ENCODE measurements at regions of chr17 and their contacts with region 1.

Region 1: GRCh38 chr17:50865984-50866774 is at the start of gene TOB1:
- DNase-seq: peak; percentile 97
- ATAC-seq: peak; percentile 76
- H3K4me3 Mint-ChIP-seq: peak within 1 kb of the TSS; percentile 99
- H3K27ac Mint-ChIP-seq: peak within 1 kb of the TSS; percentile 100
- H3K4me1 Mint-ChIP-seq: peaks cover 44% of the 10 kb centered on the region
- H3K27me3 Mint-ChIP-seq: no peaks in the 10 kb centered on the region
- CTCF ChIP-seq: no peak
- total RNA-seq, gene TOB1: 18.8 and 20.4 TPM in 2 replicates

Region 2: DNA sequence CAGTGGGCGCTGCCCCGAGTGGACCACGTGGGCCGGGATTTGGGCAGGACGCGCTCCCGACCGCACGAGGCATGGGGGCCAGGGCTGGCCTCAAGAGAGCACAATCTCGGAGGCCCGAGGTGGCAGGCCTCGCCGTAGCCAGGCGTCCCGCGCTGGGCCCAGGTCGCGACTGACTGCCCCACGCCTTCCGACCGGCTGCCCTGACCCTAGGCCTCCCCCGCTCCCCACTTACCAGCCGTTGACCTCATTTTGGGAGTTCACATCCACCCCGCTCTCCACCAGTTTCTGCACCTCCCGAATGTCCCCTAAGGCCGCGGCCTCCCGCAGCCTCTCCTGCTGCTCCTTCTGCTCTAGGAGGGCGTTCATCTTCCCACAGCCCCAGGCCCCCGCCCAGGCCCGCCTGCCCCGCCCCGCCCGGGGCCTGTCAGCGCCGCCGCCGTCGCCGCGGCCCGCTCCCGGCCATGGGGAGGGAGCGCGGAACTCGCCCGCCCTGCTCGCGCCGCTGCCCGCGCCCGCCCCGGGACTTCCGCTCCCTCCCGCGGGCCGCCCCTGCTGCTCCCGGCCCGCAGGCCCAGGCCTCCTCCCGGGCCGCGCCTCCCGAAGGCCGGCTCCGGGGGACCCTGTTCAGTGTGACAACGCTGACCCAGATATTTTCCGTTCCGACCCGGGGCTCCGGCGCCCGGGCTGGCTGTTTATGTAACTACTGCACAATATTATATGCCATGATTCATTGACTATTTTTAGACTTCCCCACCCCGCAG is 158.7 kb before region 1 on chr17 and contains the start of gene ANKRD40:
- CTCF ChIA-PET with region 1: no interaction called
- POLR2A ChIA-PET with region 1: interaction called, 4 read pairs
- intact Hi-C with region 1: loop called (anchors 2 kb)
- DNase-seq: peak; percentile 91
- ATAC-seq: peak; percentile 82
- H3K4me3 Mint-ChIP-seq: peak within 1 kb of the TSS; percentile 95
- H3K27ac Mint-ChIP-seq: peak within 1 kb of the TSS; percentile 96
- H3K4me1 Mint-ChIP-seq: peaks cover 38% of the 10 kb centered on the region
- H3K27me3 Mint-ChIP-seq: no peaks in the 10 kb centered on the region
- CTCF ChIP-seq: no peak
- total RNA-seq, gene ANKRD40: 39.0 and 40.3 TPM in 2 replicates

Region 3: DNA sequence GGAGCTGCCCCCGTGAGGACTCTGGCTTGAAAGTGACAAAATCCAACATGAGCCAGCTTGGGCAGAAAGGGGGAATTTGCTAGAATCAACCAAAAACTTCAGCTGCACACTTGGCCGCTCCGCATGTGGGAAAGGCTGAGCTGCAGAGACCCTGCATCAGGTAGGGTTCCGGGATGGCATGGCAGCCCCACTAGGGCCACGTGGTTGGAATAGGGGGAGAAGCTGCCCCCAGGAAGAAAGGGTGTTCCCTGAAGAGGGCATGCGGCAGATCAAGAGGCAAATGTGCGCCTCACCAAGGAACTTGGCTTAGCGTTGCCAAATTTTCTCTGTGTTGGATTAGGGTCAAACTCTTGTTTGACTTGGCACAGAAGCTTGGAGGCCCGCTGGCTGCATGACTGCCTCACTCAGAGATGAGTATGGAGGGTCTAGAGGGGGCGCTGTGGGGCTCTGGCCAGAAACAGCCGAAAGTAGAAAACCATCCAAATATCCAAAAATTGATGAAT is 60.0 kb before region 1 on chr17:
- CTCF ChIA-PET with region 1: no interaction called
- POLR2A ChIA-PET with region 1: no interaction called
- intact Hi-C with region 1: no loop called
- DNase-seq: no peak
- ATAC-seq: no peak
- H3K4me3 Mint-ChIP-seq: no peak overlapping the region
- H3K27ac Mint-ChIP-seq: no peak overlapping the region
- H3K4me1 Mint-ChIP-seq: no peaks in the 10 kb centered on the region
- H3K27me3 Mint-ChIP-seq: no peaks in the 10 kb centered on the region
- CTCF ChIP-seq: no peak

Region 4: GRCh38 chr17:50853015-50853615 is 13.1 kb before region 1 on chr17:
- CTCF ChIA-PET with region 1: interaction called, 37 read pairs
- POLR2A ChIA-PET with region 1: interaction called, 205 read pairs
- intact Hi-C with region 1: loop called (anchors 1 kb)
- DNase-seq: no peak
- ATAC-seq: no peak
- H3K4me3 Mint-ChIP-seq: no peak overlapping the region
- H3K27ac Mint-ChIP-seq: peak overlapping the region; percentile 76
- H3K4me1 Mint-ChIP-seq: peaks cover 14% of the 10 kb centered on the region
- H3K27me3 Mint-ChIP-seq: no peaks in the 10 kb centered on the region
- CTCF ChIP-seq: no peak

Region 5: GRCh38 chr17:50904521-50905459 is 38.6 kb after region 1 on chr17:
- CTCF ChIA-PET with region 1: no interaction called
- POLR2A ChIA-PET with region 1: interaction called, 34 read pairs
- intact Hi-C with region 1: loop called (anchors 5 kb)
- DNase-seq: no peak
- ATAC-seq: peak; percentile 28
- H3K4me3 Mint-ChIP-seq: no peak overlapping the region
- H3K27ac Mint-ChIP-seq: no peak overlapping the region
- H3K4me1 Mint-ChIP-seq: peaks cover 14% of the 10 kb centered on the region
- H3K27me3 Mint-ChIP-seq: no peaks in the 10 kb centered on the region
- CTCF ChIP-seq: no peak

Region 6: GRCh38 chr17:50949989-50950881 is 84.1 kb after region 1 on chr17:
- CTCF ChIA-PET with region 1: interaction called, 5 read pairs
- POLR2A ChIA-PET with region 1: interaction called, 53 read pairs
- intact Hi-C with region 1: loop called (anchors 1 kb)
- DNase-seq: no peak
- ATAC-seq: peak; percentile 72
- H3K4me3 Mint-ChIP-seq: peak overlapping the region; percentile 29
- H3K27ac Mint-ChIP-seq: no peak overlapping the region
- H3K4me1 Mint-ChIP-seq: peaks cover 15% of the 10 kb centered on the region
- H3K27me3 Mint-ChIP-seq: peaks cover 3% of the 10 kb centered on the region
- CTCF ChIP-seq: no peak

Region 7: GRCh38 chr17:51056813-51057510 is 190.8 kb after region 1 on chr17:
- CTCF ChIA-PET with region 1: no interaction called
- POLR2A ChIA-PET with region 1: interaction called, 13 read pairs
- intact Hi-C with region 1: no loop called
- DNase-seq: no peak
- ATAC-seq: peak; percentile 71
- H3K4me3 Mint-ChIP-seq: no peak overlapping the region
- H3K27ac Mint-ChIP-seq: no peak overlapping the region
- H3K4me1 Mint-ChIP-seq: peaks cover 20% of the 10 kb centered on the region
- H3K27me3 Mint-ChIP-seq: no peaks in the 10 kb centered on the region
- CTCF ChIP-seq: peak; percentile 63

Region 8: DNA sequence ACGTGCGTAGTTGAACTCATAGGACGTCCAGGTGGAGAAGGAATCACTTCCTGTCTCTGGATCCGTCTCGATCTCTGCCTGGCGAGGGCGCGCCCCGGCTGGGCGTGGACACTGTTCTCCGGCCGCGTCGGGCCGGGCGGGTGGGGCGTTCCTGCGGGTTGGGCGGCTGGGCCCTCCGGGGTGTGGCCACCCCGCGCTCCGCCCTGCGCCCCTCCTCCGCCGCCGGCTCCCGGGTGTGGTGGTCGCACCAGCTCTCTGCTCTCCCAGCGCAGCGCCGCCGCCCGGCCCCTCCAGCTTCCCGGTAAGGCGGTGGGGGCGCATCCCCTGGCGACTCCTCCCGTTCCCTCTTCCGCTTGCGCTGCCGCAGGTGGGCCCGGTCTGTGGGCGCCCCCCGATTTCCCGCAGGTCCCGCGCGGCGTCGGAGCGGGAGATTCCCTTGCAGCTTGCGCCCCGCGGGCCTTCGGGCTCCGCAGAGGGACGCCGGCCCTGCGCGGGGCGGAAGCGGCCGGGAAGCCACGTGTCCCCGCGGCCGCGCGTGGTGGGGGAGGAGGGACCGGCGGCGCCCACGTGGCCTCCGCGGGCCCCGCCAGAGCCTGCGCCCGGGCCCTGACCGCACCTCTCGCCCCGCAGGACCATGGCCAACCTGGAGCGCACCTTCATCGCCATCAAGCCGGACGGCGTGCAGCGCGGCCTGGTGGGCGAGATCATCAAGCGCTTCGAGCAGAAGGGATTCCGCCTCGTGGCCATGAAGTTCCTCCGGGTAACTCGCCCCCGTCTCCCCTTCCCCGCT is 300.2 kb after region 1 on chr17 and contains the start of gene NME2:
- CTCF ChIA-PET with region 1: no interaction called
- POLR2A ChIA-PET with region 1: interaction called, 13 read pairs
- intact Hi-C with region 1: loop called (anchors 5 kb)
- DNase-seq: peak; percentile 85
- ATAC-seq: peak; percentile 86
- H3K4me3 Mint-ChIP-seq: peak within 1 kb of the TSS; percentile 86
- H3K27ac Mint-ChIP-seq: peak within 1 kb of the TSS; percentile 90
- H3K4me1 Mint-ChIP-seq: peaks cover 24% of the 10 kb centered on the region
- H3K27me3 Mint-ChIP-seq: no peaks in the 10 kb centered on the region
- CTCF ChIP-seq: no peak
- total RNA-seq, gene NME2: 439 and 524 TPM in 2 replicates